ENCODE measurements at regions of chr1 and their contacts with region 1.

Region 1: DNA sequence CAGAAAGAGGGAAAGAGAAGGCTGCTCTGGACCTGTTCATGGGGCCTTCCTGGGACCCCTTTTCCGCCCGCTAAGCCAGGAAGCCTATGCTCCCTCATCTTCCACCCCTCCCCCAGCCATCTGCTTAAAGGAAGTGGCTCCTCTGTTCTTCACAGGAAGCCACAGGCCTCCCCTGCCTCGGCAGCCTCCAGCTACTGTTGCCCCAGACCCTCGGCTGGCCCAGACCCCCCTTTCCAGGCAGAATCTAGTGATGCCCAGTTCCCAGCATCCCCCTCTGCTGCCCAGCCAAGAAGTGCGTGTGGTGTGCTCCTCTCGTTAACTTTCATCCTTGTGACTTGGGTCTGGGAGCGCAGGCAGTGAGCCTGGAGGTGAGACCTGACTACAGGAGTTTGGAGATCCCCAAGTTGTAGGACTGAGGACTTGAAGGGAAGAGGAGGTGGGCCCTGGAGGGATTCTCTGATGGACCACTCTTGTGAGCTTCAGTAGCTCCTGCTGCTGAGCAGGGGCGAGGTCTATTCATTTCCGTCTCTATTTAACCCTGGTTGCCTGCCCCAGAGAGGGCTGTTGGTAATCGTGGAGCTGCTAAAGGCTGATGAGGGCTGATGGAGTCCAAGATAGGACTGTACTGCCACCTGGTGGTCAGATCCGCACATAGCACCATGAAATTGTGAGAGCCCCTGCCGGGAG is 9.1 kb downstream of the IFI6 start:
- DNase-seq: peak; percentile 93
- ATAC-seq: peak; percentile 40
- H3K4me3 ChIP-seq: peak overlapping the region in 4 of 5 experiments; percentile 20 to 33 (median 24)
- H3K4me3 Mint-ChIP-seq: peak overlapping the region; percentile 81
- H3K27ac ChIP-seq: peak overlapping the region; percentile 85 to 96
- H3K27ac Mint-ChIP-seq: peak overlapping the region; percentile 99
- H3K4me1 ChIP-seq: peaks cover 42 to 52% of the 10 kb centered on the region in 2 donors
- H3K4me1 Mint-ChIP-seq: peaks cover 50% of the 10 kb centered on the region
- H3K27me3 ChIP-seq: no peaks in the 10 kb centered on the region
- H3K27me3 Mint-ChIP-seq: no peaks in the 10 kb centered on the region
- CTCF ChIP-seq: peak; percentile 89

Region 2: GRCh38 chr1:27300341-27301051 is 362.4 kb before region 1 on chr1:
- CTCF ChIA-PET with region 1: interaction called, 6 read pairs
- POLR2A ChIA-PET with region 1: no interaction called
- intact Hi-C with region 1: loop called (anchors 1 kb)
- DNase-seq: peak; percentile 87
- ATAC-seq: peak; percentile 93
- H3K4me3 ChIP-seq: no peak overlapping the region
- H3K4me3 Mint-ChIP-seq: no peak overlapping the region
- H3K27ac ChIP-seq: no peak overlapping the region
- H3K27ac Mint-ChIP-seq: no peak overlapping the region
- H3K4me1 ChIP-seq: peaks cover 0 to 8% of the 10 kb centered on the region in 2 donors
- H3K4me1 Mint-ChIP-seq: peaks cover 3% of the 10 kb centered on the region
- H3K27me3 ChIP-seq: no peaks in the 10 kb centered on the region
- H3K27me3 Mint-ChIP-seq: no peaks in the 10 kb centered on the region
- CTCF ChIP-seq: peak; percentile 95

Region 3: GRCh38 chr1:27392096-27392777 is 270.6 kb before region 1 on chr1 and contains the start of gene GPR3:
- CTCF ChIA-PET with region 1: interaction called, 14 read pairs
- POLR2A ChIA-PET with region 1: no interaction called
- intact Hi-C with region 1: loop called (anchors 1 kb)
- DNase-seq: peak; percentile 96
- ATAC-seq: peak; percentile 91
- H3K4me3 ChIP-seq: peak within 1 kb of the TSS in 4 of 5 experiments; percentile 34 to 60 (median 56)
- H3K4me3 Mint-ChIP-seq: peak within 1 kb of the TSS; percentile 81
- H3K27ac ChIP-seq: peak within 1 kb of the TSS in 1 of 2 donors; percentile 50
- H3K27ac Mint-ChIP-seq: peak within 1 kb of the TSS; percentile 67
- H3K4me1 ChIP-seq: peaks cover 12 to 24% of the 10 kb centered on the region in 2 donors
- H3K4me1 Mint-ChIP-seq: peaks cover 22% of the 10 kb centered on the region
- H3K27me3 ChIP-seq: no peaks in the 10 kb centered on the region
- H3K27me3 Mint-ChIP-seq: peaks cover 3% of the 10 kb centered on the region
- CTCF ChIP-seq: peak; percentile 65
- total RNA-seq, gene GPR3: not detected in 2 replicates

Region 4: DNA sequence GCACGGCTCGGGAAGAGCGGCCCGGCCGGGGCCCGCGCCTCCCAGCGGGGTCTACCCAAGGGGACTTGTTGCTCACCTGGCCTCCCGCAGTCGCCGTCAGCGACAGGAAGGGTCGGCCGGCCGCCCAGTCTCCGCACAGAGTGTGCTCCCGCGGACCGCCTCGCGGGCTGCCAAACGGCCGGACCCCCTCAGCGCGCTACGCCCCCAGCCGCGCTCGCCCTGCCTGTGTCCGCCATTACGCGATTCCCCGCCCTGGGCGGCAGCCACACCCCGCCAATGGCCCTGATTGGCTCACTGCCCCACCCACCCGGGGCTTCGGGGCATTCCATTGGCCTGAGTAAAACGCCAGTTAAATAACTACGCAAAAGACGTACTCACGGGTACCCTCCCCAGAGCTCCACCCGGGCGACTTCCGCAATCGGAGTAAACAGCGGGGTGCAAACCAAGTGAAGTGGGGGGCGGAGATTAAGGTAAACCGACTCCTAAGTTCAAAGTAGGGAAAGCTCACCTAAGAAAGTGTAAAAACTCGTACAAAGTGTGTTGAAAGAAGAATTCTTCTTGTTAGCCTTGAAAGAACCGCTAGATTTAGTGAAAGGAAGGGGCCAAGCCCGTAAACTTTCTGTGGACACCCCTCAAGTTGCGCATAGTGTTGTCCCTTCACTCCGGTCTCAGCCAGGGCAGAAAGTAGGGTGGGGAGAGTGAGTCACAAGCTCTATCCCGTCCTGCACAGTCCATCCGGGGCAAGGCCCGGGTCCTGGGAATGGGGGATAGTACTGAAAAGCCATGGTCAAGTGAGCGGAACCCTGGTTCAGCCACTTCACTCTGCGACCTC is 172.7 kb before region 1 on chr1 and contains the start of gene WASF2:
- CTCF ChIA-PET with region 1: interaction called, 5 read pairs
- POLR2A ChIA-PET with region 1: no interaction called
- intact Hi-C with region 1: loop called (anchors 2 kb)
- DNase-seq: peak; percentile 98
- ATAC-seq: peak; percentile 90
- H3K4me3 ChIP-seq: peak within 1 kb of the TSS; percentile 78 to 100 (median 99)
- H3K4me3 Mint-ChIP-seq: peak within 1 kb of the TSS; percentile 99
- H3K27ac ChIP-seq: peak within 1 kb of the TSS; percentile 89 to 95
- H3K27ac Mint-ChIP-seq: peak within 1 kb of the TSS; percentile 99
- H3K4me1 ChIP-seq: peaks cover 44 to 58% of the 10 kb centered on the region in 2 donors
- H3K4me1 Mint-ChIP-seq: peaks cover 57% of the 10 kb centered on the region
- H3K27me3 ChIP-seq: no peaks in the 10 kb centered on the region
- H3K27me3 Mint-ChIP-seq: no peaks in the 10 kb centered on the region
- CTCF ChIP-seq: no peak
- total RNA-seq, gene WASF2: 166 and 169 TPM in 2 replicates

Region 5: DNA sequence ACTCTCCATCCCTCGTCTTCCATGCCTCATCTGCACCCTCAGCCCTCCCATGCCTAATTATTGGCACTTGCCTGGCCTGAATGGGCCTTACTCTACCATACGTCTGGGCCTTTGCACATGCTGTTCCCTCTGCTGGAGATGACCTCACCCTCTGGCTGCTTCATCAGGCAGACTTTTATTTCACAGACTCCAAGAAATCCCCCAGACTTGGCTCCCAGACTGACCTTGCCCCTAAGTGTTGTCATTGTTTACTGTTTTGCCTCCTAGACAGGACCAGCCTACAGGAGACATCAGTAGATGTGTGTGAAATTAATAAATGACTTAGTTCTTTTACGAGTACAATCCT is 53.7 kb before region 1 on chr1:
- CTCF ChIA-PET with region 1: interaction called, 473 read pairs
- POLR2A ChIA-PET with region 1: interaction called, 31 read pairs
- intact Hi-C with region 1: loop called (anchors 1 kb)
- DNase-seq: no peak
- ATAC-seq: peak; percentile 11
- H3K4me3 ChIP-seq: peak overlapping the region in 1 of 5 experiments; percentile 35
- H3K4me3 Mint-ChIP-seq: no peak overlapping the region
- H3K27ac ChIP-seq: peak overlapping the region; percentile 62 to 76
- H3K27ac Mint-ChIP-seq: no peak overlapping the region
- H3K4me1 ChIP-seq: peaks cover 33 to 49% of the 10 kb centered on the region in 2 donors
- H3K4me1 Mint-ChIP-seq: peaks cover 28% of the 10 kb centered on the region
- H3K27me3 ChIP-seq: no peaks in the 10 kb centered on the region
- H3K27me3 Mint-ChIP-seq: no peaks in the 10 kb centered on the region
- CTCF ChIP-seq: no peak

Region 6: GRCh38 chr1:27643701-27644625 is 18.9 kb before region 1 on chr1:
- CTCF ChIA-PET with region 1: interaction called, 101 read pairs
- POLR2A ChIA-PET with region 1: interaction called, 5 read pairs
- intact Hi-C with region 1: loop called (anchors 1 kb)
- DNase-seq: peak; percentile 82
- ATAC-seq: peak; percentile 98
- H3K4me3 ChIP-seq: no peak overlapping the region
- H3K4me3 Mint-ChIP-seq: no peak overlapping the region
- H3K27ac ChIP-seq: no peak overlapping the region
- H3K27ac Mint-ChIP-seq: peak overlapping the region; percentile 74
- H3K4me1 ChIP-seq: peaks cover 10 to 17% of the 10 kb centered on the region in 2 donors
- H3K4me1 Mint-ChIP-seq: peaks cover 16% of the 10 kb centered on the region
- H3K27me3 ChIP-seq: no peaks in the 10 kb centered on the region
- H3K27me3 Mint-ChIP-seq: no peaks in the 10 kb centered on the region
- CTCF ChIP-seq: peak; percentile 85

Measured in B cell (primary cell).